A549 (cell line): ENCODE measurements at regions of chr2 and their contacts with region 1.

Region 1: DNA sequence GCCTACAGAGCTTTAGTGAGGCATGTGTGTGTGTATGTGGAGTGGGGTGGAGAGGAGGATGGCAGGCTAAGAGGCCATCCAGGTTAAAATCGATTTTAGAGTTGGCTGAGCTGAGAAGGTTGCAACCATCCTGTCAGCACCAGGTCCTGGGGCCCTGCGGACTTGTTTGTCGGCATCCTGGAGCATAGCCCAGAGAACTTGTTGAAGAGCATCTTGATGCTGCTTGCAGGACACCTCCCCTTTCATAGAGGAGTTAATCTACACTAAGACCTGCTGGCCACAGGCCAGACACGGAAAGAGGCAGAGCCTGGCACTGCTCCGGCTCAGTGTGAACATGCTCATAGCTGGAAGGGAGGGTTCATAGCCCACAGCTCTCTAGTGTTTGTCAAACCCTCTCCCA is 72.1 kb upstream of the RGPD5 start:
- DNase-seq: no peak
- ATAC-seq: no peak
- H3K4me3 ChIP-seq: no peak overlapping the region
- H3K27ac ChIP-seq: no peak overlapping the region
- H3K4me1 ChIP-seq: 0 out of 3 replicates have a peak, but pooled peaks cover 4% of the 10 kb centered on the region
- CTCF ChIP-seq: no peak
- EP300 ChIP-seq: no peak
- POLR2A ChIP-seq: no peak
- RAD21 ChIP-seq: no peak

Region 2: GRCh38 chr2:109637749-109638570 is 84.1 kb before region 1 on chr2:
- CTCF ChIA-PET with region 1: no interaction called
- POLR2A ChIA-PET with region 1: no interaction called
- DNase-seq: no peak
- ATAC-seq: no peak
- H3K4me3 ChIP-seq: no peak overlapping the region
- H3K27ac ChIP-seq: no peak overlapping the region
- H3K4me1 ChIP-seq: no peaks in the 10 kb centered on the region
- CTCF ChIP-seq: no peak
- EP300 ChIP-seq: no peak
- POLR2A ChIP-seq: no peak
- RAD21 ChIP-seq: no peak

Region 3: GRCh38 chr2:109690822-109691547 is 31.0 kb before region 1 on chr2:
- CTCF ChIA-PET with region 1: no interaction called
- POLR2A ChIA-PET with region 1: no interaction called
- DNase-seq: no peak
- ATAC-seq: no peak
- H3K4me3 ChIP-seq: no peak overlapping the region
- H3K27ac ChIP-seq: no peak overlapping the region
- H3K4me1 ChIP-seq: peaks cover 9% of the 10 kb centered on the region
- CTCF ChIP-seq: no peak
- EP300 ChIP-seq: no peak
- POLR2A ChIP-seq: no peak
- RAD21 ChIP-seq: no peak

Region 4: GRCh38 chr2:109707281-109708147 is 14.5 kb before region 1 on chr2:
- CTCF ChIA-PET with region 1: interaction called, 11 read pairs
- POLR2A ChIA-PET with region 1: no interaction called
- DNase-seq: no peak
- ATAC-seq: no peak
- H3K4me3 ChIP-seq: no peak overlapping the region
- H3K27ac ChIP-seq: no peak overlapping the region
- H3K4me1 ChIP-seq: 0 out of 3 replicates have a peak, but pooled peaks cover 3% of the 10 kb centered on the region
- CTCF ChIP-seq: no peak
- EP300 ChIP-seq: no peak
- POLR2A ChIP-seq: no peak
- RAD21 ChIP-seq: no peak

Region 5: DNA sequence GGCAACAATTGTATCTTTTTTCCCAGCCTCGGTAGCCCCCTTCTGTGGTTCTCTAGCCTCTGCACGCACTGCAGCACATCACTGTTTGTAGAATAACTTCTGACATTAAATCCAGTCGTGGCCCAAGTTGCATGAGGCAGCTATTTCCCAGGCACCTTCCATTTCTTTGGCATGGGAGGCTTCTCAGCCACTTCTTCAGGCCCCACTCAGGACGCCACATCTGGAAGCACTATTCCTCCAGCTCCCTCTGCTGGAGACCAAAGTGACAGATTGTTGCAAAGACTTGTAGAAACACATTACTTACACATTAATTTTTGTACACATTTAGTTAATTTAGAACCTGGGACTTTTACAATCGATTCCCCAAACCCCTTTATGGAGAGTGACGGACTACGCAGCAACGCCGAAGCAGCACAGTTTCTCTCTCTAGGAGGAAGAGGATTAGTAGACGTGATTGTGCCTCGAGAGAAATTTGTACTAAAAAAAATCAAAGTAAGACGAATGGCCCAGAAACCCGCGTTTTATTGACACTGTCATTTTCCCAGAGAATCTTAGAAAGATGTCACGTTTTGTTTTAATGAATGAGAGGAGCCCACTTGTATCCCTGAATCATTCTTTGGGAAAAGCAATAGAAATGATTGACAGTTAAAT is 14.3 kb after region 1 on chr2:
- CTCF ChIA-PET with region 1: interaction called, 17 read pairs
- POLR2A ChIA-PET with region 1: no interaction called
- DNase-seq: peak; percentile 17 to 74
- ATAC-seq: peak; percentile 70 to 90; a peak in 4 of 6 replicates
- H3K4me3 ChIP-seq: no peak overlapping the region
- H3K27ac ChIP-seq: no peak overlapping the region
- H3K4me1 ChIP-seq: 0 out of 3 replicates have a peak, but pooled peaks cover 3% of the 10 kb centered on the region
- CTCF ChIP-seq: peak; percentile 86
- EP300 ChIP-seq: no peak
- POLR2A ChIP-seq: no peak
- RAD21 ChIP-seq: peak; percentile 88 to 89

Region 6: DNA sequence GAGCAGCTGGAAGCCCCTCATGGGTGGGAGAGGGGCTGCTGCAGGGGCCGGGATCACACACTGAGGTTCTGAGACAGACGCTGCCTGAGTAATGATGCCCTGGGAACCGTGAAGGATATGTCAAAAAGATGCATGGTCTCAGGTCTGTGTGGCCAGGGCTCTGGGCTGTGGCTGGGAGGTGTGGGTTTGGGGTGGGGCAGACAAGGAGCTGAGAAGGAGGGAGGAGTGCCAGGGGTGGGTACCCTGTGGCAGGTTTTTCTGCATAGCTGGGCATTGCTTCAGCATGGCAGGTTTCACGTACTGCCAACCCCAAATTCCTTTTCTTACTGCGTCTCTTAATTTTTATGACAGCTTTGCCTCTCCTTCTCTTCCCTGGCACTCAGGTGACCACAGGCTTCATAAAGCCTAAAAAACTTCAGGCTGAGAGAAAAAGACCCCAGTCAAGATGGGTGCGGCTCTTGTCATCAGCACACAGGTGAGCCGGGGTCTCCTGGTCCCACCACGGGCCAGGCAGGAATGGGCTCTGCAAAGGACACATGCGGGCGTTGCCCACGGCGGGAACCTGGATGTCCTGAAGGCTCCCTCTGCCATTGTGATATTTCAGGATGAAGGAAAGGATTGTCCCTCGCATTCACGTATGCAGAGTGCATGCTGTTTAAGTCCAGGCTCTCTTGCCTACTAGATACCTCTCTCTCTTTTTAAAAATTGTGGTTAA is 375.6 kb after region 1 on chr2:
- CTCF ChIA-PET with region 1: no interaction called
- POLR2A ChIA-PET with region 1: no interaction called
- DNase-seq: no peak
- ATAC-seq: no peak
- H3K4me3 ChIP-seq: no peak overlapping the region
- H3K27ac ChIP-seq: peak overlapping the region; percentile 50 to 77; a peak in 5 of 6 replicates
- H3K4me1 ChIP-seq: peaks cover 64% of the 10 kb centered on the region
- CTCF ChIP-seq: no peak
- EP300 ChIP-seq: no peak
- POLR2A ChIP-seq: no peak
- RAD21 ChIP-seq: no peak